Activated CD4-positive, alpha-beta memory T cell treated with anti-CD3 and anti-CD28 coated beads for 36 hours (primary cell): ENCODE measurements at regions of chr15 and their contacts with region 1.

Region 1: GRCh38 chr15:27218426-27218825 is 247.4 kb downstream of the GABRG3 start:
- DNase-seq: no peak
- H3K4me3 Mint-ChIP-seq: no peak overlapping the region
- H3K27ac Mint-ChIP-seq: no peak overlapping the region
- H3K4me1 Mint-ChIP-seq: no peaks in the 10 kb centered on the region
- H3K27me3 Mint-ChIP-seq: no peaks in the 10 kb centered on the region

Region 2: DNA sequence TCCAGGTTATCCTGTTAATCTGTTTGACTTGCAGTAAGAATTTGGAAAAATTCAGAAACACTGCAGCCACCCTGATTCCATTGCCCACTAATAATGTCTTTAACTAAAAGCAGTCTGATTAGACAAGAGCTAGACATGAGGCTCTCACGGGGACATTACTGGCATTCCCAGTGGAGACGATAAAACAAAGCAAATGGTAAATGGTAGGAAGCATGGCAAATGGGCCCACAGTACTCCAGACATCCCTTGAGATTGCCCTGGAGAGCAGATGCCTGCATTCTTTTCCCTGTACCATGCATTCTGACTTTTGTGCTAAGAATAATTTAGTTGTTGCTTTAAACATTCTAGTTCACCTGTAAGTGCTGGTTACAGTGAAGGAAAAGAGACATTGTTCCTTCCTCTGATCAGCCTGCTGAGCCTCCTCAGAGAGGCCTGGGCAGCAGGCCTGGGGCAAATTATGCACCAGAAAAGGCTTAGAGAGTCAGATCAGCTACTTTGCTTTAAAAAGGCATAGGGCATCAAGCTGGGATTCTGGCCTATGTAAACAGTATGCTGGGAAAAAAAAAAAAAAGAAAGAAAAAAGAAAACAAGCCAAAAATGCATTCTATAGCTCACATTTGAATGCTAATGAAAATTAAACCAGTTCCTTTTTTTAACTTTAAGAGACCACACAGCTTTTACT is 42.8 kb before region 1 on chr15:
- CTCF ChIA-PET with region 1: no interaction called
- POLR2A ChIA-PET with region 1: no interaction called
- intact Hi-C with region 1: loop called (anchors 2 kb)
- DNase-seq: no peak
- H3K4me3 Mint-ChIP-seq: no peak overlapping the region
- H3K27ac Mint-ChIP-seq: no peak overlapping the region
- H3K4me1 Mint-ChIP-seq: no peaks in the 10 kb centered on the region
- H3K27me3 Mint-ChIP-seq: no peaks in the 10 kb centered on the region

Region 3: GRCh38 chr15:27250223-27250622 is 31.8 kb after region 1 on chr15:
- CTCF ChIA-PET with region 1: no interaction called
- POLR2A ChIA-PET with region 1: no interaction called
- intact Hi-C with region 1: no loop called
- DNase-seq: no peak
- H3K4me3 Mint-ChIP-seq: no peak overlapping the region
- H3K27ac Mint-ChIP-seq: no peak overlapping the region
- H3K4me1 Mint-ChIP-seq: no peaks in the 10 kb centered on the region
- H3K27me3 Mint-ChIP-seq: no peaks in the 10 kb centered on the region